GM18951 (cell line): ENCODE measurements at regions of chr2 and their contacts with region 1.

Region 1: DNA sequence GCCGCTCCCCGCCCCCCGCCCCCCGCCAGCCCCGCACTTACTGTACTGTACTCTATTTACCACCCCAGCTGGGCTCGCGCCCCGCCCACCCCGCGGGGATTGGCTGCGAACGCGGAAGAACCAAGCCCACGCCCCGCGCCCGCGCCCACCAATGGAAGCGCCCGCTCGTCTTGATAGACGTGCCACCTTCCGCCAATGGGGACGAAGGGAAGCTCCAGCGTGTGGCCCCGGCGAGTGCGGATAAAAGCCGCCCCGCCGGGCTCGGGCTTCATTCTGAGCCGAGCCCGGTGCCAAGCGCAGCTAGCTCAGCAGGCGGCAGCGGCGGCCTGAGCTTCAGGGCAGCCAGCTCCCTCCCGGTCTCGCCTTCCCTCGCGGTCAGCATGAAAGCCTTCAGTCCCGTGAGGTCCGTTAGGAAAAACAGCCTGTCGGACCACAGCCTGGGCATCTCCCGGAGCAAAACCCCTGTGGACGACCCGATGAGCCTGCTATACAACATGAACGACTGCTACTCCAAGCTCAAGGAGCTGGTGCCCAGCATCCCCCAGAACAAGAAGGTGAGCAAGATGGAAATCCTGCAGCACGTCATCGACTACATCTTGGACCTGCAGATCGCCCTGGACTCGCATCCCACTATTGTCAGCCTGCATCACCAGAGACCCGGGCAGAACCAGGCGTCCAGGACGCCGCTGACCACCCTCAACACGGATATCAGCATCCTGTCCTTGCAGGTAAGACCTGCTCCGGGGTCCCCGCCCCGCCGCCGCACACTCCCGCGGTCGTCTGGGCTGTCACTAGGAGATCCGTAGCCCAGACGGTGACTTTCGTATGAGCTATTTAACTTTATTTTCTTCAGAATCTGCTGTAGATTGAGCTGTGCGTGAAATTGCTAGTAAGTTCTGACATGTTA is at the start of gene ID2:
- POLR2A ChIP-seq: peak; percentile 100

Region 2: GRCh38 chr2:7405861-7406715 is 1276.0 kb before region 1 on chr2:
- in situ Hi-C with region 1: loop called (anchors 25 kb)
- POLR2A ChIP-seq: no peak

Region 3: GRCh38 chr2:8303322-8303832 is 378.7 kb before region 1 on chr2:
- in situ Hi-C with region 1: loop called (anchors 10 kb)
- POLR2A ChIP-seq: peak; percentile 8

Region 4: DNA sequence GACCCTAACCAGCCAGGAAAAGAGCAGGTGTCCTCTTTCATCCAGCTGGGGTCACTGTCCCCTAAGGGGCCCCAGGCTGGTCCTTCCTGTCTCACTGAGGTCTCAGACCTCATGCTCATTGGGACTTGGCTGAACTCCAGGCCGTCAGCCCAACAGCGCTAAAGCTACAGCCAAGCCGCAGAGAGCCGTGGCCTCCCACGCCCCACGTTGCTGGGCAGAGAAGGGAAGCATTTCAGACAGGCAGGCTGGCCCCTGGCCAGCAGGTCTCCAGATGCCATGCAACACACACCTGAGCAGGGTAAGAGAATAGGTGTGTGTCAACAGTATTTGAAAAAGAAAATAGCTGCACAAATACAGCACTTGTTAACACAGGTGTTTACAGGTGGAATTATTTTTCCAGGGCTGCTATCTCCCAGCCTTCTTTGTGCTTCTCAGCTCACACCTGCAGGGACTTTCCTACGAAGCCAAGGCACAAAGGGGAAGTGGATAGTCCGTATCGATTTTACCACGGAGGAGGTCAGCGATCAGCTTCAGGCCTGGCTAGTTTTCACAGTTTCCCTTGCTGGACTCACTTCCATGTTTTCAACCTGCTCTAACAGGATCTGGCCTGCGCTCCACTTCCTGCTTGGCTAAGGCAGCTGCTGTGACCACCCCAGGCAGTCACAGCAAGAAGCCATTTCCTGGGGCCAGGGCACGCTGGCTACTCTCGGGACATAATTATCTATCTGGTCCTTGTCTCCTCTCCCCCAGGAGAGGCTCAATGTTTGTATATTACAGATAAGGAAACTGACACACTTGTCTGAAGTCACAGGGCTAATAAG is 156.2 kb before region 1 on chr2:
- in situ Hi-C with region 1: loop called (anchors 10 kb)
- POLR2A ChIP-seq: peak; percentile 13

Region 5: GRCh38 chr2:8821276-8822217 is 139.5 kb after region 1 on chr2:
- in situ Hi-C with region 1: no loop called
- POLR2A ChIP-seq: no peak